Activated CD4-positive, alpha-beta memory T cell treated with anti-CD3 and anti-CD28 coated beads, Interleukin-2, amount 10 ng/mL, durations not matched to agents 7 days and 5 days (primary cell): ENCODE measurements at regions of chr22 and their contacts with region 1.

Region 1: GRCh38 chr22:37608477-37609239 is at the start of gene GGA1:
- DNase-seq: peak; percentile 98
- H3K4me3 Mint-ChIP-seq: peak within 1 kb of the TSS; percentile 89
- H3K27ac Mint-ChIP-seq: peak within 1 kb of the TSS; percentile 88
- H3K4me1 Mint-ChIP-seq: peaks cover 64% of the 10 kb centered on the region
- H3K27me3 Mint-ChIP-seq: no peaks in the 10 kb centered on the region
- total RNA-seq, gene GGA1: 59.5 to 64.4 TPM

Region 2: GRCh38 chr22:37501610-37502341 is 106.9 kb before region 1 on chr22:
- CTCF ChIA-PET with region 1: no interaction called
- POLR2A ChIA-PET with region 1: no interaction called
- DNase-seq: no peak
- H3K4me3 Mint-ChIP-seq: no peak overlapping the region
- H3K27ac Mint-ChIP-seq: no peak overlapping the region
- H3K4me1 Mint-ChIP-seq: peaks cover 9% of the 10 kb centered on the region
- H3K27me3 Mint-ChIP-seq: peaks cover 15% of the 10 kb centered on the region

Region 3: GRCh38 chr22:37544955-37545699 is 63.5 kb before region 1 on chr22:
- CTCF ChIA-PET with region 1: interaction called, 30 read pairs
- POLR2A ChIA-PET with region 1: interaction called, 6 read pairs
- DNase-seq: peak; percentile 73
- H3K4me3 Mint-ChIP-seq: no peak overlapping the region
- H3K27ac Mint-ChIP-seq: no peak overlapping the region
- H3K4me1 Mint-ChIP-seq: peaks cover 30% of the 10 kb centered on the region
- H3K27me3 Mint-ChIP-seq: peaks cover 11% of the 10 kb centered on the region

Region 4: GRCh38 chr22:37589636-37590035 is 19.0 kb before region 1 on chr22:
- CTCF ChIA-PET with region 1: interaction called, 112 read pairs
- POLR2A ChIA-PET with region 1: interaction called, 28 read pairs
- DNase-seq: no peak
- H3K4me3 Mint-ChIP-seq: no peak overlapping the region
- H3K27ac Mint-ChIP-seq: no peak overlapping the region
- H3K4me1 Mint-ChIP-seq: peaks cover 13% of the 10 kb centered on the region
- H3K27me3 Mint-ChIP-seq: peaks cover 20% of the 10 kb centered on the region

Region 5: GRCh38 chr22:37633625-37634416 is 25.2 kb after region 1 on chr22:
- CTCF ChIA-PET with region 1: interaction called, 30 read pairs
- POLR2A ChIA-PET with region 1: interaction called, 20 read pairs
- DNase-seq: peak; percentile 74
- H3K4me3 Mint-ChIP-seq: peak overlapping the region; percentile 64
- H3K27ac Mint-ChIP-seq: peak overlapping the region; percentile 95
- H3K4me1 Mint-ChIP-seq: peaks cover 72% of the 10 kb centered on the region
- H3K27me3 Mint-ChIP-seq: no peaks in the 10 kb centered on the region

Region 6: GRCh38 chr22:37658133-37659065 is 49.7 kb after region 1 on chr22 and contains the start of gene PDXP:
- CTCF ChIA-PET with region 1: interaction called, 27 read pairs
- POLR2A ChIA-PET with region 1: interaction called, 15 read pairs
- DNase-seq: peak; percentile 98
- H3K4me3 Mint-ChIP-seq: peak within 1 kb of the TSS; percentile 84
- H3K27ac Mint-ChIP-seq: peak within 1 kb of the TSS; percentile 80
- H3K4me1 Mint-ChIP-seq: peaks cover 42% of the 10 kb centered on the region
- H3K27me3 Mint-ChIP-seq: no peaks in the 10 kb centered on the region
- total RNA-seq, gene PDXP: 19.1 to 21.6 TPM

Region 7: GRCh38 chr22:37686002-37686982 is 77.6 kb after region 1 on chr22 and contains the start of gene NOL12:
- CTCF ChIA-PET with region 1: interaction called, 49 read pairs
- POLR2A ChIA-PET with region 1: interaction called, 7 read pairs
- DNase-seq: peak; percentile 81
- H3K4me3 Mint-ChIP-seq: peak within 1 kb of the TSS; percentile 93
- H3K27ac Mint-ChIP-seq: peak within 1 kb of the TSS; percentile 88
- H3K4me1 Mint-ChIP-seq: peaks cover 28% of the 10 kb centered on the region
- H3K27me3 Mint-ChIP-seq: no peaks in the 10 kb centered on the region
- total RNA-seq, gene NOL12: 36.6 to 36.9 TPM